Ascending aorta (tissue), 2 donors: ENCODE measurements at regions of chr13 and their contacts with region 1.

Region 1: GRCh38 chr13:99087096-99087953 is 109.5 kb upstream of the DOCK9 start:
- DNase-seq: peak; percentile 33 to 93
- H3K4me3 ChIP-seq: peak overlapping the region; percentile 75 to 93
- H3K27ac ChIP-seq: peak overlapping the region; percentile 90 to 92
- H3K4me1 ChIP-seq: peaks cover 0 to 8% of the 10 kb centered on the region in 2 donors
- H3K27me3 ChIP-seq: no peaks in the 10 kb centered on the region
- CTCF ChIP-seq: peak in 2 of 3 experiments; percentile 16 to 21

Region 2: DNA sequence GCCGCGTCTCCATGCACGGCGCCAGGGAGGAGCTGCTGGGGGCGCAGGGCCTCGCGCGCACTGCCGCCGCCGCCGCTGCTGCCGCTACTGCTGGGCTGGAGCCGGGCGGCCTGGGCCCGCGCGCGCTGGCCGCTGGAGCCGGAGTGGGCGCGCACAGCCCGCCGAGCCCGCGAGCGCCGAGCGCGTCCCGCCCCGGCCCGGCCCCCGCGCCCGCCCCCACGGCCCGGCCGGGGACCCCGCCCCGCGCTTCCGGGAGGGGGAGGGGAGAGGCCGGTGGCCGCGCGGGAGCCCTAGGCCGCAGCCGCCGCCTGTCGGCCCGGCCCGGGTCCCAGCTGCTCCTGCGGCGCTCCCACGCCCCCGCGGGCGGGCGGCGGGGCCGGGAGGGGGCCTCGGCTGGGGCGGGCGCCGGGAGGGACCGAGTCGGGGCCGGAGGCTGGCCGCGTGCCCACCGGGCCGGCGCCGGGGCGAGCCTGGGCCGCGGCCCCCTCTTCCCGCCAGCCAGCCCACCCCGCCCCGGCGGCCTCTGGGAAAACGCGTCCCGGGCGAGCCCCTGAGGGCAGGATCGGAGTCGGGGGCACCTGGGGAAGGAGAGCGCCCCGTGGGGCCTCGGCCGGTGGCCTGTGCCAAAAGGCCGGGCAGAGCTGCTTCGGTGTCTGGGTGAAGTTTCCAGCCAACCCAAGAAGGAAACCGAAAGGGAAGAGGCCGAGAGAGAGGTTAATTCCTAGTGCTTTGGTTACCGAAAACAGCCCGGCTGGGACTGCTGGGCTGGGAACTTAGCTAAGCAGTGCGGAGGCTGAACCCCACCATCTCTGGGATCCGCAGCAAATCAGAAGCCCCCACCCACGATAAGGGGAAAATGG is 510.1 kb before region 1 on chr13 and contains the start of gene STK24:
- intact Hi-C with region 1: loop called (anchors 10 kb)
- DNase-seq: peak in 1 of 2 donors; percentile 77
- H3K4me3 ChIP-seq: peak within 1 kb of the TSS; percentile 88 to 89
- H3K27ac ChIP-seq: peak within 1 kb of the TSS; percentile 98 to 99
- H3K4me1 ChIP-seq: peaks cover 0 to 24% of the 10 kb centered on the region in 2 donors
- H3K27me3 ChIP-seq: no peaks in the 10 kb centered on the region
- CTCF ChIP-seq: no peak
- total RNA-seq, gene STK24: 35.4 TPM

Region 3: GRCh38 chr13:99018418-99019180 is 68.7 kb before region 1 on chr13:
- intact Hi-C with region 1: no loop called
- DNase-seq: no peak
- H3K4me3 ChIP-seq: no peak overlapping the region
- H3K27ac ChIP-seq: no peak overlapping the region
- H3K4me1 ChIP-seq: no peaks in the 10 kb centered on the region
- H3K27me3 ChIP-seq: no peaks in the 10 kb centered on the region
- CTCF ChIP-seq: no peak

Region 4: GRCh38 chr13:99053636-99054233 is 33.6 kb before region 1 on chr13:
- intact Hi-C with region 1: no loop called
- DNase-seq: no peak
- H3K4me3 ChIP-seq: no peak overlapping the region
- H3K27ac ChIP-seq: no peak overlapping the region
- H3K4me1 ChIP-seq: peaks cover 0 to 3% of the 10 kb centered on the region in 2 donors
- H3K27me3 ChIP-seq: no peaks in the 10 kb centered on the region
- CTCF ChIP-seq: no peak

Region 5: DNA sequence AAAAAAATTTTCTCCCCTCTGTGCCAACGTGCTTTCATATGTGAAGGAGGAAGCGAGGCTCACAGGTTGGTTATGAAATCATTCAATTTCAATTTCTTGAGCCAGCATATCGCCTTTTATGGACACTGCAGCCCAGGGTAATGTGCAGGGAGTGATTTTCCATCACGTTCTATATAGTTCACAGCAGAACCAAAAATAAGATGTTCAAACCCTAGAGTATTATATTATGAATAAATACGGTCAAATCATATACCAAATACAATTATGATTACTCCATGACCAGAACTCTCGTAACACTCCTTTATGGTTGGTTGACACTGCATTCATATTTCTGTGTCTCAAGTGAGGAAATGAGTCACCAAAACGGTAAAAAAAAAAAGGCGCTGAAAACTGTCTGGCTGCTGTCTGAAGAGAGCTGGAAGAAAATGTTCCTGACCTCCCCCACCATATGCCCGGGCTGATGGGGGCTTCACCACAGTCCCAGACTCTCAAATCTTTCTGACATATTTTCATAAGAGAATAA is 37.5 kb after region 1 on chr13:
- intact Hi-C with region 1: loop called (anchors 2 kb)
- DNase-seq: no peak
- H3K4me3 ChIP-seq: peak overlapping the region in 1 of 2 donors; percentile 8
- H3K27ac ChIP-seq: peak overlapping the region; percentile 42 to 69
- H3K4me1 ChIP-seq: no peaks in the 10 kb centered on the region
- H3K27me3 ChIP-seq: no peaks in the 10 kb centered on the region
- CTCF ChIP-seq: no peak

Region 6: DNA sequence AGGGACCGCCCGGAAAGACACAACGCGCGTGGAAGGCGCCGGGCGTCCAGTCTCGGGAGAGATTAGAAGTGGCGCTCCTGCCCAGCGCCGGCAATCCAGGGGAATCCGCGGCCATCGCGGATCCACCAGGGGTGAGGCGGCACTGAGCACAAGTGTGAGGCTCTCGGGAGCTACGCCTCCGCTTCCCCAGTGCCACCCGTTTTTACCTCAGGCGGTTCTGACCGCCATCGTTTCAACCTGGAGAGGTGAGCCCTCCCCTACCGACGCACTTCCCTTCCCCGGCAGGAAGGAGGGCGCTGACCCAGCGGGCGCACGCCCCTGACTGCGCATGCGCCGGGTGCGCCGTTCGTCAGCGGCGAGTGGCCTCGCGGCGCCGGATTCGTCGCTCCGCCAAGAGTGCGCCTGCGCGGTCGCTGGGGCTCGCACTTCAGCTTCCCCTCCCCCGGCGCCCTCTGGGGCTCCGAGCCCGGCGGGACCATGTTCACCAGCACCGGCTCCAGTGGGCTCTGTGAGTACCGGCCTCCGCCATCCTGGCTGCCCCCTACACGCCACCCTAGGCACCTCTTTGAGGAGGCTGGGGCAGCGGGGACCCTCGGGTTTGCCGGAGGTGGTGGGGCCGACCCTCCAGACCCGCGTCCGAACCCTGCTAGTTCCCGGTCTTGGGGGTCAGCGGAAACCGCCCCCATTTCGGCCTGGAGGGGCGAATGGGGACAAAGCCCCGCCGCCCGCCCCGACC is 113.3 kb after region 1 on chr13 and contains the start of gene UBAC2:
- intact Hi-C with region 1: loop called (anchors 1 kb)
- DNase-seq: peak; percentile 79 to 97
- H3K4me3 ChIP-seq: peak within 1 kb of the TSS; percentile 82 to 96
- H3K27ac ChIP-seq: peak within 1 kb of the TSS; percentile 98
- H3K4me1 ChIP-seq: peaks cover 0 to 6% of the 10 kb centered on the region in 2 donors
- H3K27me3 ChIP-seq: no peaks in the 10 kb centered on the region
- CTCF ChIP-seq: no peak
- total RNA-seq, gene UBAC2: 67.8 TPM

Region 7: DNA sequence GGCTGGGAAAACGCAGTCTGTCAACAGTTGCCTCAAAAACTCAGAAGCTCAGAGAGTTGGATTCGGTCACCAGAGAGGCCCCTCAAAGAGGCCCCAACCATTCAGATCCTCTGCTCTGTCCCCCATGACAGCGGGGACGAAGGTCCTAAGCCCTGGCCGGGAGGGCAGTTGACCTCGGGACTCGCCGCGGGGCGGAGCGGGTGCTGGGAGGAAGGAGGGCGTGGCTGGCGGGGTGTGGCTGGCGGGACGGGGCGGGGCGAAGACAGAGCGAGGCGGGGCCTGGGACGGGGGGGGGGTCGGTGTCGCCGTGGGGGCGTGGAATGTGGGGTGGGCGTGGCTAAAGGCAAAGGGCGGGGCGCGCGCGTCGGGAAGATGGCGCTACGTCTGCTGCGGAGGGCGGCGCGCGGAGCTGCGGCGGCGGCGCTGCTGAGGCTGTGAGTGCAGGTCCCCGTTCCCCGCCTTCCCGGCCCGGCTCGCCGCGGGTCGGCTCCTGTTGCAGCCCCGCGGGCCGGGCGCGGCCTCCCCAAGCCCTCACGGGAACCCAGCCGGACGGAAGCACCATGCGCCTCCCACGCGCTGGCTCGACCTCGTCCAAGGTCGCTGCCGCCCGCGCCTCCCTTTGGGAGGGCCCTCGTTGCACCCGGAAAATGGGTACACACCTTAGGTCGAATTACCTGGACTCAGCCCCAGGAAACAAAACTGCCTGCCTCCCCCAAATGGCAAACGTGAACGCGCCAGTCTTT is 519.2 kb after region 1 on chr13:
- intact Hi-C with region 1: loop called (anchors 5 kb)
- DNase-seq: peak; percentile 54 to 91
- H3K4me3 ChIP-seq: peak within 1 kb of the TSS; percentile 61 to 96
- H3K27ac ChIP-seq: peak within 1 kb of the TSS; percentile 60 to 88
- H3K4me1 ChIP-seq: peaks cover 0 to 3% of the 10 kb centered on the region in 2 donors
- H3K27me3 ChIP-seq: no peaks in the 10 kb centered on the region
- CTCF ChIP-seq: peak in 1 of 3 experiments; percentile 1

Region 8: GRCh38 chr13:99969919-99970621 is 882.7 kb after region 1 on chr13:
- intact Hi-C with region 1: loop called (anchors 5 kb)
- DNase-seq: no peak
- H3K4me3 ChIP-seq: peak overlapping the region; percentile 45 to 52
- H3K27ac ChIP-seq: no peak overlapping the region
- H3K4me1 ChIP-seq: peaks cover 18% of the 10 kb centered on the region in 2 donors
- H3K27me3 ChIP-seq: peaks cover 67% of the 10 kb centered on the region
- CTCF ChIP-seq: no peak